K562 (cell line): ENCODE measurements at regions of chr2 and their contacts with region 1.

Region 1: GRCh38 chr2:73163483-73164367 is 38.6 kb upstream of the NOTO start:
- DNase-seq: peak; percentile 81 to 86 (median 84)
- ATAC-seq: peak; percentile 97
- H3K4me3 ChIP-seq: no peak overlapping the region
- H3K27ac ChIP-seq: no peak overlapping the region
- H3K4me1 ChIP-seq: peaks cover 5% of the 10 kb centered on the region in 2 experiments; a peak in 3 of 5 replicates
- H3K27me3 ChIP-seq: peaks cover 0 to 4% of the 10 kb centered on the region in 2 experiments; a peak in 2 of 5 replicates
- CTCF ChIP-seq: peak; percentile 84 to 95 (median 91)
- EP300 ChIP-seq: no peak
- POLR2A ChIP-seq: no peak
- RAD21 ChIP-seq: peak; percentile 86 to 88

Region 2: GRCh38 chr2:72770879-72771461 is 392.8 kb before region 1 on chr2:
- CTCF ChIA-PET with region 1: no interaction called
- POLR2A ChIA-PET with region 1: no interaction called
- in situ Hi-C with region 1: no loop called
- intact Hi-C with region 1: loop called (anchors 5 kb)
- DNase-seq: peak; percentile 41 to 76 (median 54)
- ATAC-seq: peak; percentile 76
- H3K4me3 ChIP-seq: no peak overlapping the region
- H3K27ac ChIP-seq: no peak overlapping the region
- H3K4me1 ChIP-seq: no peaks in the 10 kb centered on the region
- H3K27me3 ChIP-seq: no peaks in the 10 kb centered on the region; a peak in 1 of 5 replicates
- CTCF ChIP-seq: peak; percentile 66 to 94 (median 69); a peak in 5 of 6 replicates
- EP300 ChIP-seq: no peak
- POLR2A ChIP-seq: no peak
- RAD21 ChIP-seq: peak; percentile 96

Region 3: DNA sequence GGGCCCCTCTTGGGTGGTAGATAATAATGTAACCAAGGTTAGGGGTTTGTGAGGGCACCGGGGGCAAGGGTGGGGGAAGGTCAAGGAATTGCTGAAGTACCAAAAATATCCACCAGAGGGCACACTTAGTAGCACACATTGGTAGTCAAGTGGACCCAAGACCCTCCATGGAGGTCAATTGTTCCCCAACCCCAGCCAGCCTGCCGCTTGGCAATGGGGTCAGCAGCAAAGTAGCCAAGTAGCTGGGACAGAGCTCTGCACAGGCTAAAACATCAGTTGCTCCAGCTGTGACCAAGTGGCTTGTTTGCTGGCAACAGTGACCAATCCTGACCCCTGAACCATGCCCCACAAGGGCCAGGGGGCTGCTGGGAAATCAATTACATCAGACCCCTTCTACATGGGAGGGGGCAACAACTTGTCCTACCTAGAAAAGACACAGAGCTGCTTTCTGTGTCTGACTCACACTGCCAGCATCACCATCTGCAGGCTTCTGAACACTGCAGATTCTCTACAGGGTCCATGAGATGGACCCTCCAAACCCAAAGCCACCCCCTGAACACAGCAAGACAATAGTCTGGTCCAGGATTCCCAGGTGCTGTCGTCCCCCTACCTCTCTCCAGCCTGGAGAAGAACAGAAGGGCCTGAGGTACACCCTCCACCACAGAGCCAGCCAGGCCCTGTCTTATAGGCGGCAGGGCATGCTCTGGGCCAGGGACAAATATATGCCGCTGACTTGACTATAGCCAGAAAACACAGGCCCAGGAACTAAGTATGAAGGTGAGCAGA is 170.4 kb before region 1 on chr2:
- CTCF ChIA-PET with region 1: interaction called, 16 read pairs
- POLR2A ChIA-PET with region 1: no interaction called
- in situ Hi-C with region 1: loop called (anchors 5 kb)
- intact Hi-C with region 1: loop called (anchors 2 kb)
- DNase-seq: peak; percentile 70 to 86 (median 79)
- ATAC-seq: peak; percentile 86
- H3K4me3 ChIP-seq: no peak overlapping the region
- H3K27ac ChIP-seq: no peak overlapping the region
- H3K4me1 ChIP-seq: peaks cover 0 to 12% of the 10 kb centered on the region in 2 experiments; a peak in 2 of 5 replicates
- H3K27me3 ChIP-seq: no peaks in the 10 kb centered on the region
- CTCF ChIP-seq: peak; percentile 68 to 79 (median 72)
- EP300 ChIP-seq: no peak
- POLR2A ChIP-seq: no peak
- RAD21 ChIP-seq: peak; percentile 52 to 68

Region 4: DNA sequence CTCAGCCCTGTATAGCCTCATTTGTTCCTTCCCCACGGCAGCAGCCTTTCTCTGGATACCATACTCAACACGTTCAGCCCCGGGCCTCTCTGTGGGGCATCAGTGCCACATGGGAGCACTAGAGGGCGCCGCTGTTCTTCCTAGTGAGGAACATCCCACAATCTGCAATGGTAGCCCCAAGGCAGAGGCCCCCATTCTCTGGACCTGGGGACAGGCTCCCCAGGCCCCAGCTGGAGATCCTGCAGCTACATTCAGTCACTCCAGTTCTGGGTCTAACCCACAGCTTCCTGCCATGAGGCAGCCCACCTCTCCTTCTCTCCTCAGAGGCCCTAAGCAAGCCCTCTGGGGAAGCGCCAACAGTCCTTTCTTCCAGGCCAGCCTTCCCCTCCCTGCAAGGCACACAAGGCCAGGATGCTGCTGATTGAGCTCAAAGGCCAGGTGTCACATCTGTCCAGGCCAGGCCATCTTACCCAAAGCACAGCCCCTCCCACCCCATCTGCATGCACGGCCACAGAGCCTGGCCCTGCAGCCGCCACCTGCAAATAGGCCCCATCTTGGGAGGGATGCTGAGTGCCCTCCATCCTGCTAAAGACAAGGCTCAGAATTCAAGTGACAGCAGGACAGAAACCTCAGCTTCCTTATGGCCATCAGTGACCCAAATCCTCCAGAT is 77.9 kb before region 1 on chr2:
- CTCF ChIA-PET with region 1: interaction called, 15 read pairs
- POLR2A ChIA-PET with region 1: no interaction called
- in situ Hi-C with region 1: loop called (anchors 5 kb)
- intact Hi-C with region 1: loop called (anchors 1 kb)
- DNase-seq: peak; percentile 78 to 83 (median 80)
- ATAC-seq: peak; percentile 96
- H3K4me3 ChIP-seq: no peak overlapping the region
- H3K27ac ChIP-seq: no peak overlapping the region
- H3K4me1 ChIP-seq: peaks cover 0 to 12% of the 10 kb centered on the region in 2 experiments; a peak in 4 of 5 replicates
- H3K27me3 ChIP-seq: no peaks in the 10 kb centered on the region
- CTCF ChIP-seq: peak; percentile 91 to 94 (median 93)
- EP300 ChIP-seq: no peak
- POLR2A ChIP-seq: no peak
- RAD21 ChIP-seq: peak; percentile 95